Activated CD8-positive, alpha-beta memory T cell treated with anti-CD3 and anti-CD28 coated beads, Interleukin-2, amount 10 ng/mL, durations not matched to agents 7 days and 5 days (primary cell): ENCODE measurements at regions of chr1 and their contacts with region 1.

Region 1: GRCh38 chr1:1374929-1375662 is at the start of gene AURKAIP1:
- DNase-seq: peak; percentile 99
- ATAC-seq: peak; percentile 87
- H3K4me3 Mint-ChIP-seq: peak within 1 kb of the TSS; percentile 84
- H3K27ac Mint-ChIP-seq: peak within 1 kb of the TSS; percentile 96
- H3K4me1 Mint-ChIP-seq: peaks cover 42% of the 10 kb centered on the region
- H3K27me3 Mint-ChIP-seq: no peaks in the 10 kb centered on the region
- total RNA-seq, gene AURKAIP1: 139 to 141 TPM

Region 2: GRCh38 chr1:1305300-1306069 is 69.6 kb before region 1 on chr1:
- CTCF ChIA-PET with region 1: interaction called, 15 read pairs
- DNase-seq: peak; percentile 91
- ATAC-seq: peak; percentile 67
- H3K4me3 Mint-ChIP-seq: peak overlapping the region; percentile 85
- H3K27ac Mint-ChIP-seq: peak overlapping the region; percentile 92
- H3K4me1 Mint-ChIP-seq: peaks cover 24% of the 10 kb centered on the region
- H3K27me3 Mint-ChIP-seq: no peaks in the 10 kb centered on the region

Region 3: GRCh38 chr1:1349256-1350012 is 25.7 kb before region 1 on chr1 and contains the start of gene DVL1:
- CTCF ChIA-PET with region 1: interaction called, 42 read pairs
- DNase-seq: peak; percentile 79
- ATAC-seq: peak; percentile 83
- H3K4me3 Mint-ChIP-seq: peak within 1 kb of the TSS; percentile 71
- H3K27ac Mint-ChIP-seq: peak within 1 kb of the TSS; percentile 24
- H3K4me1 Mint-ChIP-seq: peaks cover 25% of the 10 kb centered on the region
- H3K27me3 Mint-ChIP-seq: peaks cover 25% of the 10 kb centered on the region
- total RNA-seq, gene DVL1: 35.2 to 42.0 TPM

Region 4: DNA sequence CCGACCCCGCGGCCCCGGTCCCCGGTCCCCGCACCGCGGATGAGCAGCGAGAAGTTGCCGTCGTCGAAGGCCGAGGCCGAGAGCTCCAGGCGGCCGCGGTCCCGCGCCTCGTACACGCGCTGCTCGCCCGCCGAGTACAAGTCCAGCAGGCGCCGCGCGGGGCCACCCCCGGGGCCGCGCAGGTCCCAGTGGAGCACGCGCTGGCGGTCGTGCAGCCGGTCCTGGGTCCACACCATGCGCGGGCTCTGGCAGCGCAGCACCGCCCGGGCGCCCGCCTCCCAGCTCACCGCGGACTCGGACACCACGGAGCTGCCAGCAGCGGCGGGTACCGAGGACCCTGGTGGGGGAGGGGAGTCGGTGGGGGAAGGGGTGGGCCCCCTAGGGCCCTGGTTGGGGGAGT is 19.7 kb before region 1 on chr1:
- CTCF ChIA-PET with region 1: interaction called, 42 read pairs
- DNase-seq: no peak
- ATAC-seq: no peak
- H3K4me3 Mint-ChIP-seq: no peak overlapping the region
- H3K27ac Mint-ChIP-seq: no peak overlapping the region
- H3K4me1 Mint-ChIP-seq: peaks cover 15% of the 10 kb centered on the region
- H3K27me3 Mint-ChIP-seq: peaks cover 25% of the 10 kb centered on the region

Region 5: GRCh38 chr1:1399187-1399871 is 24.2 kb after region 1 on chr1 and contains the start of gene CCNL2:
- CTCF ChIA-PET with region 1: interaction called, 41 read pairs
- DNase-seq: peak; percentile 99
- ATAC-seq: peak; percentile 97
- H3K4me3 Mint-ChIP-seq: peak within 1 kb of the TSS; percentile 90
- H3K27ac Mint-ChIP-seq: peak within 1 kb of the TSS; percentile 88
- H3K4me1 Mint-ChIP-seq: peaks cover 49% of the 10 kb centered on the region
- H3K27me3 Mint-ChIP-seq: no peaks in the 10 kb centered on the region
- total RNA-seq, gene CCNL2: 120 to 124 TPM